PC-9 (cell line): ENCODE measurements at regions of chr1 and their contacts with region 1.

Region 1: GRCh38 chr1:22930235-22930912 is 42.3 kb downstream of the LACTBL1 start:
- DNase-seq: peak in 1 of 2 experiments; percentile 60
- H3K4me3 ChIP-seq: no peak overlapping the region
- H3K27ac ChIP-seq: no peak overlapping the region
- H3K4me1 ChIP-seq: no peaks in the 10 kb centered on the region
- H3K27me3 ChIP-seq: no peaks in the 10 kb centered on the region
- CTCF ChIP-seq: peak; percentile 80

Region 2: DNA sequence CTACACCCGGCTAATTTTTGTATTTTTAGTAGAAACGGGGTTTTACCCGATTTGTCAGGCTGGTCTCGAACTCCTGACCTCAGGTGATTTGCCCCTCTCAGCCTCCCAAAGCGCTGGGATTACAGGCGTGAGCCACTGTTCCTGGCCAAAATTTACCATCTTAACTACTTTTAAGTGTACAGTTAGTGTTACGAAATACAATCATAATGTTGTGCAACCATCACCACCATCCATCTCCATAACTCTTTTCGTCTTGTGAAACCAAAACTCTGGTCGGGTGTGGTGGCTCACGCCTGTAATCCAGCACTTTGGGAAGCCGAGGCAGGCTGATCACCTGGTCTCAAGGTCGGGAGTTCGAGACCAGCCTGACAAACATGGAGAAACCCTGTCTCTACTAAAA is 492.8 kb before region 1 on chr1:
- CTCF ChIA-PET with region 1: no interaction called
- POLR2A ChIA-PET with region 1: interaction called, 11 read pairs
- intact Hi-C with region 1: no loop called
- DNase-seq: no peak
- H3K4me3 ChIP-seq: no peak overlapping the region
- H3K27ac ChIP-seq: no peak overlapping the region
- H3K4me1 ChIP-seq: no peaks in the 10 kb centered on the region
- H3K27me3 ChIP-seq: no peaks in the 10 kb centered on the region
- CTCF ChIP-seq: no peak

Region 3: DNA sequence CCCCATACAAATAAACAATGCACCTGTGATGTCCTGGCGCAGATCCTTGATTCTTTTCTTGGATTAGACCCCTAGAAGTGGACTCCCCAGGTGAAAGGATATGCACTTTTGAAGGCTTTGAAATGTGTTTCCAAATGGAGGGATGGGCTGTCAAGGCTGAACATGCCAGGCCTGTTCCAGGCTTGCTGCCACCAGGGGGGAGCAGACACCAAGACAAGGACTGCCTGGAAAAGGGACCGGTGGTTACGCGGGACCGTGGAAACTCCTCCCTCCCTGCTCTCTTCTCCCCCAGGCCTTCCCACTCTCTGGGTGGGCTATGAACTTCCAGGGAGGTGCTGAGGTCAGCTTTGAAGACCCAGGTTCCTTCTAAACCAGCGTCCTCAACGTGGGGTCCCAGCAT is 264.6 kb before region 1 on chr1:
- CTCF ChIA-PET with region 1: no interaction called
- POLR2A ChIA-PET with region 1: no interaction called
- intact Hi-C with region 1: loop called (anchors 2 kb)
- DNase-seq: peak in 1 of 2 experiments; percentile 44
- H3K4me3 ChIP-seq: no peak overlapping the region
- H3K27ac ChIP-seq: no peak overlapping the region
- H3K4me1 ChIP-seq: no peaks in the 10 kb centered on the region
- H3K27me3 ChIP-seq: no peaks in the 10 kb centered on the region; the same call in 1 of the 2 replicates
- CTCF ChIP-seq: peak; percentile 66

Region 4: DNA sequence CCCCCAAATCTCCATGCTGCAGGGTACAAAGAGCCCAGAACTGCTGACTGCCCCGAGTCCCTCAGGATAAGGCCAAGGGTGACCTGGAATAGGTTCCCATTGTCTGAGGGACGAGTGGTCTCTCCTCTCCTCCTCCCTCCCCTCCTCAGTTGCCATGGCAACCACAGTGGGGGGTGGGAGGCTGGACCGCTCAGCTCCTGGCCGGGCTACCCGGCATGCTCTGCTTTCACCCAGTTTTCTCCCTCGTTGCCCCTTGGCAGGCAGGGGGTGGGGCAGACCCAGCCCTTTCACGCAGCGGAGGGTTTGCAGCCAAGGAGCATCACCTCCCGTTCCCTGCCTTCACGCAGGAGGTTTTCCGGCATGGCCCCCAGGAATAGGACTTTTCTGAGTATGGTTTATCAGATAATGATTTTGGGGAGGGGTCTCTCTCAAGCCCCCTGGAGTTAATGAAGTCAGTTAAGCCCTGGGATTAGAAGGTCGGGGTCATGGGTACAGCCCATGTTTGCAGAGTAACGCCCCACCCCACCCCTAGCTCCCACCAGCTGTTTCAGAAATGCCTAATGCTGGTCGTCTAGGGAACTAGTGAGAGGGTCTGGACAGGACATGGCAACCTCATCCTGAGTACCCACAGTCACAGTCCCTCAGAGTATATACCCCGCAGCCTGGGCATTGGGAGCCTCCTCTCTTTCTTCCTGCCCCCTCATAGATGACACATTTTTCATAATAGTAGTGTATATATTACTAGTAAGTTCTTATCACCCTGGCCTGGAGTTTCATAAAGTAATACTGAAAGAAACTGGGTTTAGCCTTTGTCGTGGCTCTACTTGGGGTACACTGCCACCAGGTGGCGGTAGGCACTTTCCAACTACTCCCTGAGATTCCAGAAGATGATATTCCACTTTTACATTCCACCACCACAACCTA is 256.6 kb before region 1 on chr1:
- CTCF ChIA-PET with region 1: no interaction called
- POLR2A ChIA-PET with region 1: no interaction called
- intact Hi-C with region 1: loop called (anchors 1 kb)
- DNase-seq: peak in 1 of 2 experiments; percentile 64
- H3K4me3 ChIP-seq: no peak overlapping the region
- H3K27ac ChIP-seq: no peak overlapping the region
- H3K4me1 ChIP-seq: no peaks in the 10 kb centered on the region
- H3K27me3 ChIP-seq: no peaks in the 10 kb centered on the region
- CTCF ChIP-seq: peak; percentile 81